ENCODE measurements at regions of chr11 and their contacts with region 1.

Region 1: GRCh38 chr11:9015677-9016076 is 11.9 kb upstream of the NRIP3 start:
- DNase-seq: peak; percentile 84 to 86
- ATAC-seq: peak; percentile 95 to 98
- H3K4me3 ChIP-seq: no peak overlapping the region
- H3K27ac ChIP-seq: no peak overlapping the region
- H3K4me1 ChIP-seq: no peaks in the 10 kb centered on the region
- CTCF ChIP-seq: peak; percentile 82
- EP300 ChIP-seq: no peak
- POLR2A ChIP-seq: no peak
- RAD21 ChIP-seq: peak; percentile 67 to 68

Region 2: GRCh38 chr11:9003573-9004309 is 11.9 kb before region 1 on chr11 and contains the start of gene NRIP3:
- CTCF ChIA-PET with region 1: interaction called, 24 read pairs
- POLR2A ChIA-PET with region 1: interaction called, 4 read pairs
- DNase-seq: peak; percentile 43 to 48
- ATAC-seq: peak; percentile 67 to 88
- H3K4me3 ChIP-seq: peak within 1 kb of the TSS; percentile 50
- H3K27ac ChIP-seq: peak within 1 kb of the TSS in 1 of 2 experiments; percentile 82; a peak in 4 of 6 replicates
- H3K4me1 ChIP-seq: peaks cover 4% of the 10 kb centered on the region; the same call in 1 of the 3 replicates
- CTCF ChIP-seq: no peak
- EP300 ChIP-seq: no peak
- POLR2A ChIP-seq: 0 out of 2 replicates have a peak, but pooled peaks have one; percentile 6
- RAD21 ChIP-seq: no peak
- polyA plus RNA-seq, gene NRIP3: 1.0 and 1.4 TPM in 2 replicates

Region 3: DNA sequence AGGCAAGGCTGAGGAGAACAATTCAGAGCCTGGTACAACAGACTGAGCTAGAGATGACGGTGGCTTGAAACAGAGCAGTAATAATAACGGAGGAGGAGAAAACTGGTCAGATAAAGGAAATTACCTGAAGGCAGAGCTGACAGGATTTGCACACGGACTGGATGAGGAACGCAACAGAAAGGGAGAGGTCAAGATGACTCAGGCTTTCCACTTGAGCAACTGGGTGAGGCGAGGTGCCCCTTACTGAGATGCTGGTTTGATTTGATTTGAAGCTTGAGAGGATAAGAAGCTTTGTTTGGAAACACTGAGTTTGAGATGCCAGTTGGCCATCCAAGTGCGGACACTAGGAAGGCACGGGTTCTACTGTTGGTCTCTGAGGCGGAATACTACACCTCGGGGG is 23.5 kb after region 1 on chr11:
- CTCF ChIA-PET with region 1: interaction called, 16 read pairs
- POLR2A ChIA-PET with region 1: no interaction called
- DNase-seq: peak in 1 of 2 experiments; percentile 17
- ATAC-seq: no peak
- H3K4me3 ChIP-seq: no peak overlapping the region
- H3K27ac ChIP-seq: no peak overlapping the region
- H3K4me1 ChIP-seq: no peaks in the 10 kb centered on the region
- CTCF ChIP-seq: no peak
- EP300 ChIP-seq: no peak
- POLR2A ChIP-seq: no peak
- RAD21 ChIP-seq: no peak

Region 4: GRCh38 chr11:9075556-9075955 is 59.9 kb after region 1 on chr11:
- CTCF ChIA-PET with region 1: interaction called, 18 read pairs
- POLR2A ChIA-PET with region 1: no interaction called
- DNase-seq: no peak
- ATAC-seq: no peak
- H3K4me3 ChIP-seq: no peak overlapping the region
- H3K27ac ChIP-seq: no peak overlapping the region
- H3K4me1 ChIP-seq: no peaks in the 10 kb centered on the region
- CTCF ChIP-seq: no peak
- EP300 ChIP-seq: no peak
- POLR2A ChIP-seq: no peak
- RAD21 ChIP-seq: no peak

Region 5: GRCh38 chr11:9120664-9121485 is 105.2 kb after region 1 on chr11:
- CTCF ChIA-PET with region 1: interaction called, 13 read pairs
- POLR2A ChIA-PET with region 1: no interaction called
- DNase-seq: peak; percentile 33 to 39
- ATAC-seq: peak; percentile 73 to 93; a peak in 5 of 6 replicates
- H3K4me3 ChIP-seq: no peak overlapping the region
- H3K27ac ChIP-seq: no peak overlapping the region
- H3K4me1 ChIP-seq: no peaks in the 10 kb centered on the region
- CTCF ChIP-seq: peak; percentile 21; the same call in 1 of the 3 replicates
- EP300 ChIP-seq: no peak
- POLR2A ChIP-seq: no peak
- RAD21 ChIP-seq: peak in 1 of 2 experiments; percentile 22; a peak in 1 of 5 replicates